HEK293 (cell line): ENCODE measurements at regions of chr18 and their contacts with region 1.

Region 1: GRCh38 chr18:48951448-48952286 is 902 bp upstream of the SMAD7 start:
- H3K4me3 ChIP-seq: peak overlapping the region; percentile 91
- H3K27ac ChIP-seq: peak overlapping the region; percentile 100
- H3K4me1 ChIP-seq: peaks cover 18% of the 10 kb centered on the region
- CTCF ChIP-seq: peak; percentile 63; the same call in 1 of the 2 replicates

Region 2: DNA sequence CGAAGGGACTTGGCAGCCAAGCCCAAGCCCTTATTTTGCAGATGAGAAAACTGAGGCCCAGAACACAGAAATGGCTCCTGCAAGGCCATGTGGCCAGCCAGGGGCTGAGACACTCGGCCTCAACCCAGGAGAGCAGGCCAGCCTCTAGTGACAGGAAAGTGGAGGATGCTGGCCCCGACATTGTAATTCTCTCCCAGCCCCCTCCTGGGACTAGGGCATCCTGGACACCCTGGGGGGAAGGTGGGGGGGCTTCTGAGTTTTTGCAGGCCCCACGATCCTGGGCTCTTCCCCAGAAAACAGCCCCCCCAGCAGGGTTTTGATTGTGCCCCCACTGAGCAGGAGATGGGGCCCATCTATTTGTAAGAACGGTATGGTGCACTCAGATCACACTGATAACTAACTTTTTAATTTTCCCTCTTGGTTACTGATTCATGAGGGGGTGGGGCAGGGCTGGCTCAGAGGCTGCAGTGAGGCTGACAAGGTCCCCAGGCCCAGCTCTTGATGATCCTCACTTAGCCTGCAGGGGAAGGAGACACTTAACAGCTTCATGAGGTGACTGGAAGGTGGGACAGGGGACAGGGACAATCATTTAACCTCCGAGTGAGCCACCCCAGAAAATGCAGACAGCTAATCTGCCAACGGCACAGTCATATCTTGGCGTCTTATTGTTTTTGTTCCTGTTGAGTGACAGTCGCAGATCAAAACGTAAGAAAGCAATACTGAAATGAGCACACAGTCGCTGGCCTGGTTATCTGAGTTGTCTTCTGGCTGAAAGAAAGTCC is 19.8 kb before region 1 on chr18:
- CTCF ChIA-PET with region 1: no interaction called
- POLR2A ChIA-PET with region 1: interaction called, 12 read pairs
- H3K4me3 ChIP-seq: no peak overlapping the region
- H3K27ac ChIP-seq: peak overlapping the region; percentile 80
- H3K4me1 ChIP-seq: peaks cover 77% of the 10 kb centered on the region
- CTCF ChIP-seq: no peak

Region 3: DNA sequence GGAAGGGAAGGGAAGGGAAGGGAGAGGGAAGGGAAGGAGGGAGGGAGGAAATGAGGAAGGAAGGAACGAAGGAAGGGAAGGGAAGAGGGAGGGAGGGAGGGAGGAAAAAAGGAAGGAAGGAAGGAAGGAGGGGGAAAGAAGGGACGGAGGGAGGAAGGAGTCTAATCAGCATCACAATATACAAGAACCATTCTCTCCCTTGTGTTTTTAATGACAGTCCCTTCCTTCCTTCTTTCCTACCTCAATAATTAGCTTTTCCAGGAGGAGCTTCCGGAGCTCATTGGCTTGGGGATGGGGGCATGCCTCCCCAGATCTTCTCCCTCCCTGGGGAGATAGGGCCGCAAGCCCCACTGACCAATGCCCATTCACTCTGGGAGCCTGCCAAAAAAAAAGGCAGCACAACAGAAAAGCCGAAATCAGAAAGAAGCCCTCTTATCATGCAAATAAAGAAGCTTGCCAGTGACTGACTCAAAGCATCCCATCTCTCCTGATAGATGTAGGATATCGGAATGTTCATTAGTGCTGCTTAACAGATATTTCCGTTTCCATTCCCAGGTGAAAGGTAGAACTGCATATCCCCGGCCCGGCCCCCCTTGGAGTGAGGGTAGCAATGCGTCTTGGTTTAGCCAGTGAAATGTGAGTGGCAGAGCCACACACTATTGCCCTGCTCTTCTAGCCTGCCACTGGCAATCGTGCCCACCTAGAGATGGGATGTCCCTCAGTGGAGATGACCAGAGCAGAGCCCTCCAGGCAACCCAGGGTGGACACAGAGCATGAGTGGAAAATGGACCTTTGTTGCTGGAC is 16.9 kb after region 1 on chr18:
- CTCF ChIA-PET with region 1: interaction called, 5 read pairs
- POLR2A ChIA-PET with region 1: interaction called, 39 read pairs
- H3K4me3 ChIP-seq: no peak overlapping the region
- H3K27ac ChIP-seq: no peak overlapping the region
- H3K4me1 ChIP-seq: peaks cover 6% of the 10 kb centered on the region
- CTCF ChIP-seq: no peak

Region 4: GRCh38 chr18:48983771-48984355 is 32.2 kb after region 1 on chr18:
- CTCF ChIA-PET with region 1: no interaction called
- POLR2A ChIA-PET with region 1: interaction called, 16 read pairs
- H3K4me3 ChIP-seq: no peak overlapping the region
- H3K27ac ChIP-seq: 0 out of 2 replicates have a peak overlapping the region, but pooled peaks have one; percentile 24
- H3K4me1 ChIP-seq: peaks cover 15% of the 10 kb centered on the region
- CTCF ChIP-seq: no peak

Region 5: GRCh38 chr18:49021433-49022129 is 69.9 kb after region 1 on chr18:
- CTCF ChIA-PET with region 1: interaction called, 4 read pairs
- POLR2A ChIA-PET with region 1: interaction called, 28 read pairs
- H3K4me3 ChIP-seq: peak overlapping the region; percentile 32
- H3K27ac ChIP-seq: no peak overlapping the region; the same call in 1 of the 2 replicates
- H3K4me1 ChIP-seq: peaks cover 9% of the 10 kb centered on the region
- CTCF ChIP-seq: peak; percentile 68; the same call in 1 of the 2 replicates

Region 6: GRCh38 chr18:49178736-49179135 is 227.1 kb after region 1 on chr18:
- CTCF ChIA-PET with region 1: interaction called, 5 read pairs
- POLR2A ChIA-PET with region 1: interaction called, 19 read pairs
- H3K4me3 ChIP-seq: no peak overlapping the region
- H3K27ac ChIP-seq: no peak overlapping the region
- H3K4me1 ChIP-seq: peaks cover 9% of the 10 kb centered on the region
- CTCF ChIP-seq: peak; percentile 20; the same call in 1 of the 2 replicates

Region 7: GRCh38 chr18:49447810-49448745 is 496.4 kb after region 1 on chr18:
- CTCF ChIA-PET with region 1: no interaction called
- POLR2A ChIA-PET with region 1: no interaction called
- H3K4me3 ChIP-seq: no peak overlapping the region
- H3K27ac ChIP-seq: no peak overlapping the region
- H3K4me1 ChIP-seq: no peaks in the 10 kb centered on the region
- CTCF ChIP-seq: 0 out of 2 replicates have a peak, but pooled peaks have one; percentile 27